Posterior cingulate gyrus (tissue), 11 donors: ENCODE measurements at regions of chr5 and their contacts with region 1.

Region 1: GRCh38 chr5:73088026-73088425 is 32.3 kb upstream of the TMEM171 start:
- DNase-seq: no peak

Region 2: GRCh38 chr5:73170522-73170921 is 82.5 kb after region 1 on chr5:
- intact Hi-C with region 1: loop called (anchors 1 kb)
- DNase-seq: peak in 2 of 10 donors; percentile 30 to 34

Region 3: DNA sequence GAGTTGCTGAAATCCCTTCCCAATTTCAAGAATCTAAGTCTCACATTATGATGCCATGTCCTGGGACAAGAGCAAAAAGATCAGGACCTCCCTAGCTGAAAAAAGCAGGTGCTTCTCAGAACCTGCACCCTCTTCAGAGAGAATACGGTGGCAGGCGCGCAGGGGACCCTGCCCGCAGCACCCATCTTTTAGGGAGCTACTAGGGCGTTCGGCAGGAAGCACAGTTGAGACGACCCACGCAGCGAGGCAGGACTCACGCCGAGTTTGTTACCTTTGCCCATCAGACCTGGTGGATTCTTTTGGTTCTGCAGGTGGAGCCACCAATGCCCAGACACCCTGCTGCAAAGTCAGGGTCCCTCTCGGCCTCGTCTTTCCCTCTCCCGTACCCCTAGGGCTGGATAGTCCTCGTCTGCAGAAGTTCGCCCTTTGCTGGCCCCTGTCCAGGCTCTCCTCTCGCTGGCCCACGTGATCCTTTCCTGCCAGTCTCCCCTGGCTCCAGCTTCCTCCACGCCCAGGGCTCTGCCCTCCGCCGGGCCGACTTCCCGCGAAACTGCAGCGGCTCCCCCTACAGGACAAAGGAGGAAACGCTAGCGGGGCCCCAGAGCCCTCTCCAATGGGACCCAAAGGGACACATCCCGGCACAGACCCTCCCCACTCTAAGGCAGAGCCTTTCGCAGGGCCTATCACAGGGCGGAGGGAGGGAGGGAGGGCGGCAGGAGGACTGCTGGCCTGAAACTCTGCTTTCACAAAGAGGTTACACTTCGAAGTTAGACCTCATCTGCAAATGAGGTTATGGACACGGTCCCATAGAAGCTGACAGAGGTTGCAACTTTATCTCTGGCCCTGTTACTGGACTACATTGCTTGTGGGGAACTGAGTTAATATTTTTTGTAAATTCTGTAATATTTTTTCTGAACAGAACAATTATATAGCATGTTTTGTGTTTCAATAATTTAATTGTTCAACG is 113.8 kb after region 1 on chr5:
- intact Hi-C with region 1: loop called (anchors 1 kb)
- DNase-seq: peak; percentile 22 to 94 (median 68)